PC-9 (cell line): ENCODE measurements at regions of chr9 and their contacts with region 1.

Region 1: DNA sequence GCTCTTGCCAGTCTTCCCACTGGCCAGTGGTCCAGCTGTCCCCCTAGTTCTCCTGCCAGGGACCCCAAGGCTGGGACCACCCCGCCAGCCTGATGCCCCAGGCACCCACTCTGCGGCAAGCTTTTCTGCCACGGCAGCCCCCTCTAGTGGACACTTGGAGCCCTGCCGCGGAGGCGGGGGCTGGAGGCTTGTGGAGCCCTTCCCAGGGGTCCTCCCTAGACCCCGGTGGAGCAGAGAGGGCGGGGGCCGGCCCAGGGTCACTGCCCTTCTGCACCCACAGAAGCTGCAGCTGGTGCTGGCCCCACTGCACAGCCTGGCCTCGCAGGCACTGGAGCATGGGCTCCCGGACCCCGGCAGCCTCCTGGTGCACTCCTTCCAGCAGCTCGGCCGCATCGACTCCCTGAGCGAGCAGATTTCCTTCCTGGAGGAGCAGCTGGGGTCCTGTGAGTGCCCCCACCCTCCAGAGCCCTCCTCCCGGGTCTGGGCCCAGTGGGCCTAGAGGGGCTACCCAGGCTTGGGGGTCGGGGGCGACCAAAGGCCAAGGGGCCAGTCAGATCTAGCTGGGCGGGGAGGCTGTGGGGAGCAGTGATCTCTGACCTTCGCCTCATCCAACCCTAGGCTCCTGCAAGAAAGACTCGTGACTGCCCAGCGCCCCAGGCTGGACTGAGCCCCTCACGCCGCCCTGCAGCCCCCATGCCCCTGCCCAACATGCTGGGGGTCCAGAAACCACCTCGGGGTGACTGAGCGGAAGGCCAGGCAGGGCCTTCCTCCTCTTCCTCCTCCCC is 9.1 kb downstream of the EGFL7 start:
- DNase-seq: peak in 1 of 2 experiments; percentile 46
- H3K4me3 ChIP-seq: no peak overlapping the region
- H3K27ac ChIP-seq: no peak overlapping the region
- H3K4me1 ChIP-seq: no peaks in the 10 kb centered on the region
- H3K27me3 ChIP-seq: no peaks in the 10 kb centered on the region
- CTCF ChIP-seq: peak; percentile 87

Region 2: GRCh38 chr9:136740971-136741882 is 69.4 kb after region 1 on chr9:
- CTCF ChIA-PET with region 1: no interaction called
- POLR2A ChIA-PET with region 1: interaction called, 14 read pairs
- intact Hi-C with region 1: no loop called
- DNase-seq: no peak
- H3K4me3 ChIP-seq: no peak overlapping the region
- H3K27ac ChIP-seq: no peak overlapping the region
- H3K4me1 ChIP-seq: no peaks in the 10 kb centered on the region
- H3K27me3 ChIP-seq: peaks cover 81% of the 10 kb centered on the region
- CTCF ChIP-seq: no peak